Right cardiac atrium (tissue), 5 donors: ENCODE measurements at regions of chr5 and their contacts with region 1.

Region 1: DNA sequence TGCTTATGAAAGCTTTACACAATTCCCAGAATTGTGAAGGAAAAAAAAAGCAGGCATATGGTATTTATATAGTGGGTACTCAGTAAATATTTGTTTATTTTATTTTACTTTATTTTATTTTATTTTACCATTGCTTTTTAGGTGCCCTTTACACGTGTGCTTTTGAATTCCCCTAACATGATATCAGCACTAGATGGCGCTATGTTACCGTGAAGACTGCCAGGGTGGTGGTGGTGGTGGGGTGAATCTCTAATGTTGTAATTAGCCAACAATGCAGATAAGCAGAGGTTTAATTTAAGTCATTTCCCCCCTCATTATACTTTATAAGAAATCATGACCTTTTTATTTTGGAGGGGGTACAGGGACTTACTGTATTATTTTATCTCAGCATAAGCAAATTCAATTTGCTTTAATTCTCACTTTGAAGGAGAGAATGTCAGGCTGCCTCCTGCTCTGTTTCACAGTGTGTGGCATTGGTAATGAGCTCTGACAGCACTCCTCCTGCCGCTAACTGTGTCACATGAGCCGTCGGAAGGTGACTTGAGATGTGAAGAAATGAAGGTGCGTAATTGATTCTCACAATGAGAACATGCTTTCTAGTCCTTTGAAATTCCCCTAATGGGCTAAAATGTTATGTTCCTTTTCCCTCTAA is 165.6 kb downstream of the YTHDC2 start:
- DNase-seq: no peak
- ATAC-seq: peak; percentile 68 to 80
- H3K4me3 ChIP-seq: no peak overlapping the region
- H3K27ac ChIP-seq: no peak overlapping the region
- H3K4me1 ChIP-seq: no peaks in the 10 kb centered on the region
- H3K27me3 ChIP-seq: no peaks in the 10 kb centered on the region

Region 2: GRCh38 chr5:113246361-113246870 is 432.6 kb before region 1 on chr5:
- intact Hi-C with region 1: no loop called
- DNase-seq: peak in 2 of 3 donors; percentile 16 to 49
- ATAC-seq: peak; percentile 57 to 59
- H3K4me3 ChIP-seq: peak overlapping the region; percentile 29
- H3K27ac ChIP-seq: peak overlapping the region; percentile 81
- H3K4me1 ChIP-seq: peaks cover 32% of the 10 kb centered on the region
- H3K27me3 ChIP-seq: no peaks in the 10 kb centered on the region

Region 3: GRCh38 chr5:113632996-113633395 is 46.1 kb before region 1 on chr5:
- intact Hi-C with region 1: no loop called
- DNase-seq: no peak
- ATAC-seq: no peak
- H3K4me3 ChIP-seq: no peak overlapping the region
- H3K27ac ChIP-seq: no peak overlapping the region
- H3K4me1 ChIP-seq: no peaks in the 10 kb centered on the region
- H3K27me3 ChIP-seq: no peaks in the 10 kb centered on the region

Region 4: GRCh38 chr5:114176356-114176755 is 497.3 kb after region 1 on chr5:
- intact Hi-C with region 1: no loop called
- DNase-seq: no peak
- ATAC-seq: no peak
- H3K4me3 ChIP-seq: no peak overlapping the region
- H3K27ac ChIP-seq: no peak overlapping the region
- H3K4me1 ChIP-seq: no peaks in the 10 kb centered on the region
- H3K27me3 ChIP-seq: no peaks in the 10 kb centered on the region

Region 5: GRCh38 chr5:114789773-114790402 is 1110.8 kb after region 1 on chr5:
- intact Hi-C with region 1: loop called in 2 of 4 experiments (anchors 5 to 10 kb)
- DNase-seq: no peak
- ATAC-seq: no peak
- H3K4me3 ChIP-seq: no peak overlapping the region
- H3K27ac ChIP-seq: no peak overlapping the region
- H3K4me1 ChIP-seq: no peaks in the 10 kb centered on the region
- H3K27me3 ChIP-seq: no peaks in the 10 kb centered on the region